ENCODE measurements at regions of chr6 and their contacts with region 1.

Region 1: DNA sequence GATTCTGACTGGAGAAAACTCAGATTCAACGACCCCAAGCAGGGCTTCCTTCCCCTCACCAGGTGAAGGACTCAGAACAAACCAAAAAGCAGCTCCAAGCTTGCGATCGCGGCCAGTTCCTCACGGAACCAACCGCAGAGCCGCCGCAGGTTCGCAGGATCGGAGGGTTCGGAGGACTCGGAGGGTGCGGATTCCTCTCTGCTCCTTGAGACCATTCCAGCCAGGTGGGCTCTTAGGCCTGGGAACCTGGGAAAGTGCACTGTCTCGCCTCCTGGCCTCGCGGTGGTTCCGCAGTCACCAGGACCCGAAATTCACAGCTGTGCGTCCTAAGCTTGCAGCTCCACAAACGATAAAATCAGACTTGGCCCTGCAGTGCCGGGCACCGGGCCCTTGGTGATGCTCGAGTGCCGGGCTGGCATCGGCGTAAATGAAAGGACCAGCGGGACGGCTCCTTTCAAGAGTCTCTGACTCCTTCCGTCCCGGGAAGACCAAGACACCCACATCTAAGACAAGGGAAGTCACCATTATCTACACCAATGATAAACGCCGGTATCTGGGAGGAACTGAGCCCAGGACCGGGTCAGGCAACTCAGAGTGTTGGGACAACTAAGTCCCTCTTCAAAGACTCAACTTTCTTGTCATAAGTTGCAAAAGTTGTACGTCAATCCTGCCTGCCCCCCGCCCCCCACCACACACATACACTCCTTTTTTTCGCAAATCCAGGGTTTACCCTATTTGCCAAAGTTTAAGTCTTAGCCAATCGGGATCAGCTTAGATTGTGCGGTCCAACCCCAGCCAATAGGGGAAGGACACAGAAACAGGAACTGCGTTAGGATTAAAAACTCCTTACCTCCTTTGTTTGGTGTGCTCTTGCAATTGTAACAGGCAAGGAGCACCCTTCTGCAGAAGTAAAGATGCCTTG is 69.8 kb upstream of the PRSS16 start:
- DNase-seq: peak; percentile 56 to 80 (median 71)
- H3K4me3 ChIP-seq: peak overlapping the region; percentile 100
- H3K4me3 Mint-ChIP-seq: peak overlapping the region; percentile 93 to 100 (median 97)
- H3K27ac ChIP-seq: peak overlapping the region; percentile 89
- H3K27ac Mint-ChIP-seq: peak overlapping the region; percentile 75 to 100 (median 92)
- H3K4me1 ChIP-seq: no peaks in the 10 kb centered on the region
- H3K4me1 Mint-ChIP-seq: peaks cover 12 to 26% (median 16%) of the 10 kb centered on the region in 3 donors
- H3K27me3 ChIP-seq: no peaks in the 10 kb centered on the region
- H3K27me3 Mint-ChIP-seq: peaks cover 3 to 18% of the 10 kb centered on the region in 2 donors

Region 2: DNA sequence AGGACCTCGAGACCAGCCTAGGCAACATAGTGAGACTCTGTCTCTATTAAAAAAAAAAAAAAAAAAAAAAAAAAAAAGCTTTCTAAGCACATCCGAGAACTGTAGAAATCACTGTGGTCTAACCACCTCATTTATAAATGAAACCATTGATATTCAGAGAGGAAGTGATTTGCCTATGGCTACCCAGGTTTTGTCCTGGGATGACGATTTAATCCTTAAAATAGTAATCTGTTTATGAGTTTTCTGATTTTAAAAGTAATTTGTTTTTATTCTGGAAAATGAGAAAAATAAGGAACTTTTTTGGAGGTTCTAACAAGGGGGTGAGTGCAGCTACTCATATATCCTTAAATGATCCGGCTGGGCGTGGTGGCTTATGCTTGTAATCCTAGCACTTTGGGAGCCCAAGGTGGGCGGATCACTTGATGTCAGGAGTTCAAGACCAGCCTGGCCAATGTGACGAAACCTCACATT is 819.2 kb before region 1 on chr6:
- CTCF ChIA-PET with region 1: no interaction called
- POLR2A ChIA-PET with region 1: no interaction called
- DNase-seq: no peak
- H3K4me3 ChIP-seq: no peak overlapping the region
- H3K4me3 Mint-ChIP-seq: no peak overlapping the region
- H3K27ac ChIP-seq: no peak overlapping the region
- H3K27ac Mint-ChIP-seq: no peak overlapping the region
- H3K4me1 ChIP-seq: peaks cover 25% of the 10 kb centered on the region
- H3K4me1 Mint-ChIP-seq: peaks cover 26 to 29% (median 29%) of the 10 kb centered on the region in 3 donors
- H3K27me3 ChIP-seq: no peaks in the 10 kb centered on the region
- H3K27me3 Mint-ChIP-seq: peaks cover 0 to 1% of the 10 kb centered on the region in 2 donors

Region 3: GRCh38 chr6:27126815-27127537 is 50.8 kb before region 1 on chr6:
- CTCF ChIA-PET with region 1: interaction called, 11 read pairs
- POLR2A ChIA-PET with region 1: interaction called, 8 read pairs
- DNase-seq: peak; percentile 71 to 87 (median 77)
- H3K4me3 ChIP-seq: peak overlapping the region; percentile 54
- H3K4me3 Mint-ChIP-seq: peak overlapping the region; percentile 69 to 80 (median 77)
- H3K27ac ChIP-seq: peak overlapping the region; percentile 89
- H3K27ac Mint-ChIP-seq: peak overlapping the region; percentile 21 to 90 (median 86)
- H3K4me1 ChIP-seq: peaks cover 15% of the 10 kb centered on the region
- H3K4me1 Mint-ChIP-seq: peaks cover 16 to 21% (median 18%) of the 10 kb centered on the region in 3 donors
- H3K27me3 ChIP-seq: no peaks in the 10 kb centered on the region
- H3K27me3 Mint-ChIP-seq: no peaks in the 10 kb centered on the region

Region 4: GRCh38 chr6:27188885-27189418 is 11.2 kb after region 1 on chr6:
- CTCF ChIA-PET with region 1: interaction called, 16 read pairs
- POLR2A ChIA-PET with region 1: interaction called, 3 read pairs
- DNase-seq: peak; percentile 23 to 68 (median 60)
- H3K4me3 ChIP-seq: peak overlapping the region; percentile 80
- H3K4me3 Mint-ChIP-seq: peak overlapping the region; percentile 85 to 94 (median 93)
- H3K27ac ChIP-seq: peak overlapping the region; percentile 83
- H3K27ac Mint-ChIP-seq: peak overlapping the region in 7 of 8 donors; percentile 48 to 93 (median 83)
- H3K4me1 ChIP-seq: no peaks in the 10 kb centered on the region
- H3K4me1 Mint-ChIP-seq: peaks cover 10 to 17% (median 13%) of the 10 kb centered on the region in 3 donors
- H3K27me3 ChIP-seq: no peaks in the 10 kb centered on the region
- H3K27me3 Mint-ChIP-seq: peaks cover 0 to 3% of the 10 kb centered on the region in 2 donors

Region 5: DNA sequence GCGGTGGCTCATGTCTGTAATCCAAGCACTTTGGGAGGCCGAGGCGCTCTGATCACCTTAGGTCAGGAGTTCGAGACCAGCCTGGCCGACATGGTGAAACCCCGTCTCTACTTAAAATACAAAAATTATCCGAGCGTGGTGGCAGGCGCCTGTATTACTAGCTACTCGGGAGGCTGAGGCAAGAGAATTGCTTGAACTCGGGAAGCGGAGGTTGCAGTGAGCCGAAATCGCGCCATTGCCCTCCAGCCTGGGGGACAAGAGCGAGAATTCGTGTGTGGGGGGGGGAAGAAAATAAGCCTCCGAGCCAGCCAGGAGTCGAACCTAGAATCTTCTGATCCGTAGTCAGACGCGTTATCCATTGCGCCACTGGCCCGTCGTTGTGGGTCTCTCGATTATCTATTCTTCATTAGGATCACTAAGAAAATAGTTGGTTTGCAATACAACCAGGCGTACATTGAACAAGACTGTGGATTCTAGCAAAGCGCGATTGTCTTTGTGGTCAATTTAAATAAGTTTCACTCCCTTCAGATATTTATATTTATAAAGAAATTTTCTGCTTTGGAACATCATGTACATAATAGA is 35.9 kb after region 1 on chr6:
- CTCF ChIA-PET with region 1: no interaction called
- POLR2A ChIA-PET with region 1: no interaction called
- DNase-seq: no peak
- H3K4me3 ChIP-seq: no peak overlapping the region
- H3K4me3 Mint-ChIP-seq: no peak overlapping the region
- H3K27ac ChIP-seq: peak overlapping the region; percentile 64
- H3K27ac Mint-ChIP-seq: no peak overlapping the region
- H3K4me1 ChIP-seq: no peaks in the 10 kb centered on the region
- H3K4me1 Mint-ChIP-seq: peaks cover 0 to 1% (median 0%) of the 10 kb centered on the region in 3 donors
- H3K27me3 ChIP-seq: no peaks in the 10 kb centered on the region
- H3K27me3 Mint-ChIP-seq: peaks cover 50 to 69% of the 10 kb centered on the region in 2 donors

Region 6: GRCh38 chr6:27295301-27296081 is 117.7 kb after region 1 on chr6:
- CTCF ChIA-PET with region 1: no interaction called
- POLR2A ChIA-PET with region 1: no interaction called
- DNase-seq: no peak
- H3K4me3 ChIP-seq: peak overlapping the region; percentile 1
- H3K4me3 Mint-ChIP-seq: peak overlapping the region in 4 of 7 donors; percentile 65 to 76 (median 69)
- H3K27ac ChIP-seq: peak overlapping the region; percentile 46
- H3K27ac Mint-ChIP-seq: peak overlapping the region in 6 of 8 donors; percentile 1 to 79 (median 58)
- H3K4me1 ChIP-seq: no peaks in the 10 kb centered on the region
- H3K4me1 Mint-ChIP-seq: peaks cover 0 to 2% (median 0%) of the 10 kb centered on the region in 3 donors
- H3K27me3 ChIP-seq: peaks cover 55% of the 10 kb centered on the region
- H3K27me3 Mint-ChIP-seq: peaks cover 86 to 91% of the 10 kb centered on the region in 2 donors

Measured in CD8-positive, alpha-beta memory T cell (primary cell).